OCI-LY7 (cell line): ENCODE measurements at regions of chr11 and their contacts with region 1.

Region 1: DNA sequence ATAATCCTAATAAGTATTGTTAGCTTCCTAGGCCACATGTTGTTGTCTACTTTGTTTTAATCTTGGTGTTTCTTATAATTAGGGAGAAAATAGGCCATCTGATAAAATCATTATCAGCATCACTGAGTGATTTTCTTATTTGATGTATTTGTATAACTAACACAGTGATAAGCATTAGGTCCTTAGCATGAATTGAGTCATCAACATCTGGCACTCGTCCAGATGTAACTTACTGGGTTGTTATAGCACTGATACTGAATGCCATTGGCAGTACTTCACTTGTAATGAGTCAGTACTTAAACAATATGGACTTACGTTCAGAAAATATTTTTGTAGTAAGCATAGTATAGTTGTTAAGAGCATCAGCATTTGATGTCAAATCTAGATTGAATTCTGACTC is 16.2 kb downstream of the API5 start:
- DNase-seq: no peak
- H3K4me3 ChIP-seq: no peak overlapping the region
- H3K27ac ChIP-seq: no peak overlapping the region
- H3K4me1 ChIP-seq: no peaks in the 10 kb centered on the region
- CTCF ChIP-seq: no peak

Region 2: GRCh38 chr11:43419460-43419859 is 91.5 kb after region 1 on chr11:
- CTCF ChIA-PET with region 1: no interaction called
- POLR2A ChIA-PET with region 1: no interaction called
- intact Hi-C with region 1: loop called (anchors 5 kb)
- DNase-seq: peak; percentile 57
- H3K4me3 ChIP-seq: no peak overlapping the region
- H3K27ac ChIP-seq: no peak overlapping the region
- H3K4me1 ChIP-seq: no peaks in the 10 kb centered on the region
- CTCF ChIP-seq: peak; percentile 95